ENCODE measurements at regions of chr13 and their contacts with region 1.

Region 1: GRCh38 chr13:33743438-33744368 is 74.2 kb upstream of the RFC3 start:
- DNase-seq: peak; percentile 56
- H3K4me3 ChIP-seq: peak overlapping the region; percentile 11
- H3K27ac ChIP-seq: peak overlapping the region; percentile 99
- H3K4me1 ChIP-seq: peaks cover 86% of the 10 kb centered on the region
- CTCF ChIP-seq: no peak

Region 2: DNA sequence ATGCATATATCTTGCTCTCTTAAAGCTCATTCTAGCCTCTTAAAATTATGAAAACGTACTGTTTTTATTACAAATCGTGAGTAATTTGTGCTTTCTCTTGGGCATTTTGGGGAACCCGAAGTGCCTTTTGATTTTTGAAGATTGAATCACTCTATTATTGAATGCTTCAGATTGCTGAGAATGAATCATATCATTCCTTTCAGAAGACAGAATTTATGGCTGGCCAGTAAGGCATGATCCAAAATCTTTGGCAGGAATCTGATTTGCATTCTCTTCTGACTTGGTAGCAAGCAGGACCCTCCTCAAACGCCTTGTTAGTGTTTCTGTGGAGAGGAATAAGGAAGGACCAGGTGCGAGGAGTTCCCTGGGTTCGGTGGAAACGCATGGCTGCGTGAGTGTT is 507.7 kb before region 1 on chr13:
- CTCF ChIA-PET with region 1: no interaction called
- POLR2A ChIA-PET with region 1: no interaction called
- intact Hi-C with region 1: no loop called
- DNase-seq: no peak
- H3K4me3 ChIP-seq: no peak overlapping the region
- H3K27ac ChIP-seq: no peak overlapping the region
- H3K4me1 ChIP-seq: no peaks in the 10 kb centered on the region
- CTCF ChIP-seq: no peak

Region 3: GRCh38 chr13:33723772-33724435 is 19.8 kb before region 1 on chr13:
- CTCF ChIA-PET with region 1: interaction called, 4 read pairs
- POLR2A ChIA-PET with region 1: interaction called, 78 read pairs
- intact Hi-C with region 1: loop called (anchors 1 kb)
- DNase-seq: peak; percentile 91
- H3K4me3 ChIP-seq: no peak overlapping the region
- H3K27ac ChIP-seq: peak overlapping the region; percentile 24
- H3K4me1 ChIP-seq: peaks cover 54% of the 10 kb centered on the region
- CTCF ChIP-seq: peak; percentile 91

Region 4: GRCh38 chr13:33761740-33762139 is 18.0 kb after region 1 on chr13:
- CTCF ChIA-PET with region 1: interaction called, 3 read pairs
- POLR2A ChIA-PET with region 1: interaction called, 10 read pairs
- intact Hi-C with region 1: no loop called
- DNase-seq: peak; percentile 57
- H3K4me3 ChIP-seq: no peak overlapping the region
- H3K27ac ChIP-seq: peak overlapping the region; percentile 47
- H3K4me1 ChIP-seq: peaks cover 27% of the 10 kb centered on the region
- CTCF ChIP-seq: peak; percentile 66

Region 5: GRCh38 chr13:33775339-33776108 is 31.8 kb after region 1 on chr13:
- CTCF ChIA-PET with region 1: interaction called, 3 read pairs
- POLR2A ChIA-PET with region 1: interaction called, 14 read pairs
- intact Hi-C with region 1: no loop called
- DNase-seq: no peak
- H3K4me3 ChIP-seq: no peak overlapping the region
- H3K27ac ChIP-seq: no peak overlapping the region
- H3K4me1 ChIP-seq: peaks cover 31% of the 10 kb centered on the region
- CTCF ChIP-seq: no peak

Region 6: DNA sequence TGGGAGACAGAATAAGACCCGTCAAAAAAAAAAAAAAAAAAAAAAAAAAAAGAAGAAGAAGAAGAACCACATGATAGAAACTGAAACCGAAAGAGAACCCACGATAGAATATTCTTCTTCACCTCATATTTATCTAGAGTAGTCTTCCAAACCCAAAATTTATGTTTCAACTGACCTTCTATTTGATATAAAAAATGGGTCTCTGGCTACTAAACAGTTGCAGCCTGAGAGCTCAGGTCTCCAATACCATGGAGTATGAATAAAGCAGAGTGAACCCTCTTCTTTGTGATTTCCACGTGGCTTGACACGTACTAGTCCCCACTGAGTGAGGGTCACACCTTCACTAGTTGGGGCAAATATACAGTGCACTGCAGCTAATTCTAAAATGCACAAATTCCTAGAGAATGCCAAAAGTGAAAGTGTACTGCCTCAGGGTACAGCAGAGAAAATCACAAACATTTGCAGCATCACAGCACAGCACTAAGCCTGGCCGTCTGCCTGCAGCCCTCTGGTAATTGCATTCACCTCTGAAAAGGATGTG is 43.4 kb after region 1 on chr13:
- CTCF ChIA-PET with region 1: no interaction called
- POLR2A ChIA-PET with region 1: interaction called, 5 read pairs
- intact Hi-C with region 1: loop called (anchors 2 kb)
- DNase-seq: peak; percentile 53
- H3K4me3 ChIP-seq: peak overlapping the region; percentile 58
- H3K27ac ChIP-seq: peak overlapping the region; percentile 53
- H3K4me1 ChIP-seq: peaks cover 29% of the 10 kb centered on the region
- CTCF ChIP-seq: no peak

Region 7: DNA sequence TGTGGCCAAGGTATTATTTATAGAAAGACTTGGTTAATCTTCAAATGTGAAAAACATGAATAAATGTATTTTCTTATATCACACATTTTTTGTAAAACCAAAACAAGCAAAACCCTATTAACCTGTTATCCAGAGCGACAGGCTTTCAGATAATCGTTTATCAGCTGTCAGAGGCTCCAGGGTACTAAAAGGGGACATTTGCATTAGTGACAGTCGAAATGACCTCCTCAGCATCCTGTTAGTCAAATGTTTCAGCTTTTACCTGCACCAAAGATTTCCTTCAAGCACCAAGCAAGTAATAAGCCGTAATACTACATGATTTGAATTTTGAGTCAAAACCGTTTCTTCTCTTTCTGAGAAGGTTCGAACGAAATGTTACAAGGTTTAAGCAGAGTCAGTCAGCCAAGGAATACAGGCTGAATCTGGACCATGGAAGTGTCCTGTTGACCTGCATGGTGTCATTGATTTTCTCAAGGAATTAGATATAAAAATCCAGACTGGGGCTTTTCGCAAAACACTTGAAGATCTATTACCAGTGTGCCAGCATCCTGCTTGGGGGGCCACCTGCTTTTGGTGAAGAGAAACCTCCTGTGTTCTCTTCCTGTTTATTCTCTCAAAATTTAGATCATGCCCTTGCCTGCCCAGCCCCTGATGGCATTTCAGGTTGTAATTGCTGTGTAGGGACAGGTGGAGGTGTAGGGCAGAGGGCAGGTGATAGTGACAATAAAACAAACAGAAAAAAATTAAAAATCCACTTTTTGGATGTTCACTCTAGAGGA is 63.0 kb after region 1 on chr13:
- CTCF ChIA-PET with region 1: no interaction called
- POLR2A ChIA-PET with region 1: interaction called, 3 read pairs
- intact Hi-C with region 1: loop called (anchors 1 kb)
- DNase-seq: peak; percentile 79
- H3K4me3 ChIP-seq: peak overlapping the region; percentile 60
- H3K27ac ChIP-seq: peak overlapping the region; percentile 90
- H3K4me1 ChIP-seq: peaks cover 46% of the 10 kb centered on the region
- CTCF ChIP-seq: 0 out of 2 replicates have a peak, but pooled peaks have one; percentile 19

Region 8: GRCh38 chr13:33904431-33904830 is 160.7 kb after region 1 on chr13:
- CTCF ChIA-PET with region 1: no interaction called
- POLR2A ChIA-PET with region 1: no interaction called
- intact Hi-C with region 1: no loop called
- DNase-seq: no peak
- H3K4me3 ChIP-seq: no peak overlapping the region
- H3K27ac ChIP-seq: no peak overlapping the region
- H3K4me1 ChIP-seq: no peaks in the 10 kb centered on the region
- CTCF ChIP-seq: no peak